ENCODE measurements at regions of chr14 and their contacts with region 1.

Region 1: DNA sequence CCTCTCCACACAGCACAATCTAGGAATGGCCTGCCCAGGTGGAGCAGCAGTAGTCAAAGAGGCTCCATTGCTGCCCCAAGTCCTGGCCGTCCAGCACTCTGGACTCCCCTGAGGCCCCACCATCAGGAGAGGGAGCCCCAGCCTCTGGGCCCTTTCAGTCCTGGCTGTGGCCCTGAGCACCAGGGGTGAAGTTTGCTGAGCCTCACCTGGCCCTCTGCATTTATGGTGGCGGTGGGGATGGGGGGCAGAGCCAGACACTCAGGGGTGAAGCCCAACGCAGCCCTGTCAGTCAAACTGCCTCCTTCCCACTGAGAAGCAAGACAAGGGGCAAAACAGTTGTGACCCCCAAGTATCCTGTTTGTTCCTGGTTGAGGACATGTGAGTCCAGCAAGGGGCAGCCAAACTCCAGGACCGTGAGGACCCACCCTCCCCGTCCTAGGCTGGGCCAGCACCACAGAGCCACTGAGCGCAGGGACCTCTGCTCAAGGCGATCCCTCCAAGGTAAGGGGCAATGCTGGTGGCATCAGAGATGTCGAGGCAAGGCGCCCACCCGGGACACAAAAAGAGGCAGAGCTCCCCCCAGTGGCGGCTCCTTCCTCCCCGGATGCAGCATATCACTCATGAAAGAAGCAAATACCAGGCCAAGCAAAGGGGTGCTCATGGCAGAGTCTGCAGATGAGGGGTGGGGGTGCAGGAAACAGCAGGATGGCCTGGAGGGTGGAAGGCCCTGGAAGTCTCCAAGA is 4.8 kb upstream of the AMN start:
- H3K4me3 Mint-ChIP-seq: no peak overlapping the region
- H3K27ac Mint-ChIP-seq: no peak overlapping the region
- H3K4me1 Mint-ChIP-seq: no peaks in the 10 kb centered on the region
- H3K27me3 Mint-ChIP-seq: no peaks in the 10 kb centered on the region

Region 2: GRCh38 chr14:102694530-102695166 is 223.0 kb before region 1 on chr14:
- intact Hi-C with region 1: loop called (anchors 5 kb)
- H3K4me3 Mint-ChIP-seq: no peak overlapping the region
- H3K27ac Mint-ChIP-seq: no peak overlapping the region
- H3K4me1 Mint-ChIP-seq: peaks cover 35% of the 10 kb centered on the region
- H3K27me3 Mint-ChIP-seq: no peaks in the 10 kb centered on the region

Region 3: GRCh38 chr14:102878174-102878969 is 39.3 kb before region 1 on chr14:
- intact Hi-C with region 1: no loop called
- H3K4me3 Mint-ChIP-seq: no peak overlapping the region
- H3K27ac Mint-ChIP-seq: no peak overlapping the region
- H3K4me1 Mint-ChIP-seq: no peaks in the 10 kb centered on the region
- H3K27me3 Mint-ChIP-seq: no peaks in the 10 kb centered on the region

Measured in dendritic cell treated with granulocyte-macrophage colony-stimulating factor and Interleukin-4, amounts not matched to agents 40 ng/mL and 50 ng/mL, for 4 days (primary cell).